ENCODE measurements at regions of chr7 and their contacts with region 1.

Region 1: DNA sequence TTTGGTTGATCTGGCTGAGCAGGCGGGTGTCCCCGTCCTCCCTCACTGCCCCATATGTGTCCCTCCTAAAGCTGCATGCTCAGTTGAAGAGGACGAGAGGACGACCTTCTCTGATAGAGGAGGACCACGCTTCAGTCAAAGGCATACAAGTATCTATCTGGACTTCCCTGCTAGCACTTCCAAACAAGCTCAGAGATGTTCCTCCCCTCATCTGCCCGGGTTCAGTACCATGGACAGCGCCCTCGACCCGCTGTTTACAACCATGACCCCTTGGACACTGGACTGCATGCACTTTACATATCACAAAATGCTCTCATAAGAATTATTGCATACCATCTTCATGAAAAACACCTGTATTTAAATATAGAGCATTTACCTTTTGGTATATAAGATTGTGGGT is 26.9 kb upstream of the TRIM56 start:
- DNase-seq: peak; percentile 52 to 75
- ATAC-seq: peak; percentile 74 to 83 (median 76)
- H3K4me3 ChIP-seq: no peak overlapping the region
- H3K27ac ChIP-seq: no peak overlapping the region
- H3K4me1 ChIP-seq: no peaks in the 10 kb centered on the region
- H3K27me3 ChIP-seq: peaks cover 0 to 32% (median 2%) of the 10 kb centered on the region in 3 donors
- CTCF ChIP-seq: no peak

Region 2: DNA sequence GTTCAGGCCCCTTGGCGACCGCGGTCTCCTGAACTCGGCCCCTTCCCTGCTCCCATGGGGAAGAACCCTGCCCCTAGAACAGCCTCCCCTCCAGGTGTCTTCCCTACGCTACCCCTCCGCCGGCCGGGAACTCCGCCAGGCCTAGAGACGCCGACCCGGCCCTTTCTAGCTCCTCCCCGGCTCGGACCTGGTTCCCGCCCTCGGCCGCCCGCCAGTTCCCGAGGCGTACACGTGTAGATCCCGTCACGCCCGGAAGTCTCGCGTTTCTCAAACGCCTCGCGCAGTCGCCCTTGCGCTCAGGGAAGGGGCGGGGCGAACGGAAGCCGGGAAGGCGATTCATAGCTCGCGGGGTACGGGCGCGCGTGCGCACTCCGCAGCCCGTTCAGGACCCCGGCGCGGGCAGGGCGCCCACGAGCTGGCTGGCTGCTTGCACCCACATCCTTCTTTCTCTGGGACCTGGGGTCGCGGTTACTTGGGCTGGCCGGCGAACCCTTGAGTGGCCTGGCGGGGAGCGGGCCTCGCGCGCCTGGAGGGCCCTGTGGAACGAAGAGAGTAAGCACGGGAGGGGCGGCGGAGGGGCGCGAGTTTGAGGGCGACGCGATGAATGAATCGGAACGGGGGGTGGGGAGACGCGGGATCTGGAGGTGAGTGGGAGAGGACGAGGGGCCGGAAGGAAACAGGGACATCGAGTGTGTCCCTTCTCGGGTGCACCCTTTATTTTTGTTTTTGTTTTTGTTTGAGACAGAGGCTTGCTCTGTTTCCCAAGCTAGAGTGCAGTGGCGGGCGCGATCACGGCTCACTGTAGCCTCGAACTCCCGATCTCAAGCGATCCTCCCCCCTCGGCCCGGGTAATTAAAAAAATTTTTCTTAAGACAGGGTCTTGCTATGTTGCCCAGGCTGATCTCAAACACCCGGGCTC is 352.3 kb before region 1 on chr7 and contains the start of gene POP7:
- intact Hi-C with region 1: loop called in 1 of 2 experiments (anchors 2 kb)
- DNase-seq: peak; percentile 99 to 100
- ATAC-seq: peak; percentile 99
- H3K4me3 ChIP-seq: peak within 1 kb of the TSS; percentile 80
- H3K27ac ChIP-seq: peak within 1 kb of the TSS; percentile 89
- H3K4me1 ChIP-seq: peaks cover 13% of the 10 kb centered on the region
- H3K27me3 ChIP-seq: no peaks in the 10 kb centered on the region
- CTCF ChIP-seq: no peak
- total RNA-seq, gene POP7: 28.4 to 44.4 (median 39.4) TPM

Region 3: GRCh38 chr7:100803398-100804233 is 254.7 kb before region 1 on chr7:
- intact Hi-C with region 1: loop called in 1 of 2 experiments (anchors 2 kb)
- DNase-seq: peak; percentile 79 to 80
- ATAC-seq: peak; percentile 87 to 91 (median 90)
- H3K4me3 ChIP-seq: no peak overlapping the region
- H3K27ac ChIP-seq: no peak overlapping the region
- H3K4me1 ChIP-seq: peaks cover 6% of the 10 kb centered on the region
- H3K27me3 ChIP-seq: peaks cover 0 to 17% (median 7%) of the 10 kb centered on the region in 3 donors
- CTCF ChIP-seq: no peak

Region 4: GRCh38 chr7:100896732-100897608 is 161.4 kb before region 1 on chr7:
- intact Hi-C with region 1: loop called (anchors 1 kb)
- DNase-seq: peak; percentile 75 to 77
- ATAC-seq: peak in 2 of 4 donors; percentile 23 to 24
- H3K4me3 ChIP-seq: peak overlapping the region; percentile 79
- H3K27ac ChIP-seq: peak overlapping the region; percentile 85
- H3K4me1 ChIP-seq: peaks cover 16% of the 10 kb centered on the region
- H3K27me3 ChIP-seq: peaks cover 0 to 6% (median 0%) of the 10 kb centered on the region in 3 donors
- CTCF ChIP-seq: peak; percentile 73

Region 5: DNA sequence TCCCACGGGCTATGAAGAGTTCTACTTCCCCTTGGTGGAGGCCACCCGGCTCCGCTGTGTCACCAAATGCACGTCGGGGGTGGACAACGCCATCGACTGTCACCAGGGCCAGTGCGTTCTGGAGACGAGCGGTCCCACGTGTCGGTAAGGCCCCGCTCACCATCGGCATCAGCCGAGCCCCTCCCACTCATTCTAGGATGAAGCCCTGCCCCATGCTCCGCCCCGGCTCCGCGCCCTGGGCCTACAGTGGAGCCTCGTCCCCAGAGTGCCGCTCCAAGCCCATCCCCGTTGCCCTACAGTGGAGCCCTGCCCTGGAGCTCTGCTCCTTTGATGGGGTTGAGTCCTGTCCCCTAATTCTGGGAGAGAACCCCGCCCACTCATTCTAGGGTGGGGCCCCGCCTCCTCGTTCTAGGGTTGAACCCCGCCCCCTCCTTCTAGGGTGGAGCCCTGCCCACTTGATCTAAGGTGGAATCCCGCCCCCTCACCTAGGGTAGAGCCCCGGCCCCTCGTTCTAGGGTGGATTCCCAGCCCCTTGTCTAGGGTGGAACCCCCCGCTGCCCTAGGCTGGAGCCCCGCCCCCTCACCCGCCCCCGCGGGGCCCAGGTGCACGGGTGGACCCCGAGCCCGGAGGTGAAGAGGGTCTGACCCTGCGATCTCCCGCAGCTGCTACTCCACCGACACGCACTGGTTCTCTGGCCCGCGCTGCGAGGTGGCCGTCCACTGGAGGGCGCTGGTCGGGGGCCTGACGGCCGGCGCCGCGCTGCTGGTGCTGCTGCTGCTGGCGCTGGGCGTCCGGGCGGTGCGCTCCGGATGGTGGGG is 92.4 kb before region 1 on chr7:
- intact Hi-C with region 1: loop called in 1 of 2 experiments (anchors 5 kb)
- DNase-seq: peak; percentile 53 to 75
- ATAC-seq: peak; percentile 67 to 77 (median 74)
- H3K4me3 ChIP-seq: peak overlapping the region; percentile 49
- H3K27ac ChIP-seq: no peak overlapping the region
- H3K4me1 ChIP-seq: peaks cover 7% of the 10 kb centered on the region
- H3K27me3 ChIP-seq: peaks cover 0 to 80% (median 20%) of the 10 kb centered on the region in 3 donors
- CTCF ChIP-seq: peak; percentile 62

Region 6: DNA sequence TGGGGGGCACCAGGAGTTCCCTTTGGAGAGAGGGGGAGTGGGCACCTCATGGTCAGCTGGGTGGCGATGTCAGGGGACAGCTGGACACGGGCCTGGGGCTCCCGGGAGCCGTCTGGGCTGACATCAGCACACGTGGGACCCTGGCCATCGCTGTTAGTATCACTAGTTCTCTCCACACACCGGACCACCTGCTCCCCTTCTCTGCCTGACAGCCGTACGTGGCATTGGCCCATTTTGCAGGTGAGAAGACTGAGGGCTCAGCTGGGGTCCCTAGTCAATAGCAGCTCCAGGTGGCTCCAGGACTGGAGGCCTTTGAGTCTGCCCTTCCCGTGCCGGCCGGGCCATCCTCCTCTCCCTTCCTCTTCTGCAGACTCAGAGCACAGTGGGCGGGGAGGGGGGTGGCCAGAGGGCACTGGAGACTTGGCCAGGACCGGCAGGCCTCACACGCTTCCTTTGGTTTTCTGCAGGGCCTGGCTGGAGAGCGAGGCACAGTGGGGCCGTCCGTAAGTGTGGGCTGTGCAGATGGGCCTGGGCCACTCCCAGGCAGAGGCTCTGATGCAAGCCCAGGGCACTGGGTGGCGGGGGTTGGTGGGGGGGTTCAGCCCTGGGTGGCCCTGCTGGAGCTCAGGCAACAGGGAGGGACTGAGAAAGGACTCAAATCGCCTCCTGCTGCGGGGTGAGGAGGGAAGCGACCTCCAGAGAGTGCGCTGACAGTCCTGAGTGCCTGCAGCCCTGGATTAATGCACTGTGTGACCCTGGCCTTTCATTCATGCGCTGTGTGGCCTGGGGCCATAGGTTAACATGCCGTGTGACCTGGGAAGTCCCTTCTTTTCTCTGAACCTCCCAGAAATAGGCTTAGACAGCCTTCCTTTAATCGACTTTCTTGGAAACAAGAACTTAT is 492.5 kb after region 1 on chr7:
- intact Hi-C with region 1: no loop called
- DNase-seq: peak in 1 of 2 donors; percentile 44
- ATAC-seq: no peak
- H3K4me3 ChIP-seq: no peak overlapping the region
- H3K27ac ChIP-seq: no peak overlapping the region
- H3K4me1 ChIP-seq: no peaks in the 10 kb centered on the region
- H3K27me3 ChIP-seq: no peaks in the 10 kb centered on the region
- CTCF ChIP-seq: no peak

Measured in psoas muscle (tissue), 8 donors.